ENCODE measurements at regions of chr14 and their contacts with region 1.

Region 1: GRCh38 chr14:96100161-96101029 is 61.2 kb downstream of the C14orf132 start:
- DNase-seq: peak; percentile 78
- ATAC-seq: peak; percentile 70
- H3K4me3 ChIP-seq: no peak overlapping the region
- H3K27ac ChIP-seq: no peak overlapping the region
- H3K4me1 ChIP-seq: peaks cover 8% of the 10 kb centered on the region
- H3K27me3 ChIP-seq: no peaks in the 10 kb centered on the region
- CTCF ChIP-seq: peak; percentile 93

Region 2: DNA sequence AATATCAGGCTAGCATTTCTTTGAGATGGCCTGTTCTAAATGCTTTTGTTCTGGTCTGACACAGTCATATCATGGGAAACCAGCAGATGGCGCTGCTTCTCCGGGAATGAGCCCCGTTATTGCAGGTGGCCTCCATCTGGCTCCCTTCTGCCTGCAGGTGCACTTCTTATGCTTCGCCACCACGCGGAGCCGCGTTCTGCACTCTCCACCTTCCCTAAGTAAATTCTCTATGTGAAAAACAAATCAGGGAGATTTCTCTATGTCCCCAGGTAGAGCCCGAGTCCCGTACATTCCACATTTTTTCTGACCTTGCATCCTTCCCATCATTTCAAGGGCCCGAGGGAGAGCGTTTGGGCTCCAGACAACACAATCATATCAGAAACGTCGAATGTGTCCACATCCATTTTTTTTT is 539.4 kb before region 1 on chr14:
- CTCF ChIA-PET with region 1: no interaction called
- POLR2A ChIA-PET with region 1: no interaction called
- intact Hi-C with region 1: loop called (anchors 10 kb)
- DNase-seq: peak; percentile 90
- ATAC-seq: peak; percentile 96
- H3K4me3 ChIP-seq: no peak overlapping the region
- H3K27ac ChIP-seq: no peak overlapping the region
- H3K4me1 ChIP-seq: no peaks in the 10 kb centered on the region
- H3K27me3 ChIP-seq: no peaks in the 10 kb centered on the region
- CTCF ChIP-seq: peak; percentile 97

Region 3: GRCh38 chr14:95993768-95994592 is 106.4 kb before region 1 on chr14:
- CTCF ChIA-PET with region 1: no interaction called
- POLR2A ChIA-PET with region 1: no interaction called
- intact Hi-C with region 1: loop called (anchors 10 kb)
- DNase-seq: peak; percentile 49
- ATAC-seq: no peak
- H3K4me3 ChIP-seq: no peak overlapping the region
- H3K27ac ChIP-seq: no peak overlapping the region
- H3K4me1 ChIP-seq: no peaks in the 10 kb centered on the region
- H3K27me3 ChIP-seq: no peaks in the 10 kb centered on the region
- CTCF ChIP-seq: peak; percentile 80

Region 4: GRCh38 chr14:96056509-96057422 is 43.6 kb before region 1 on chr14:
- CTCF ChIA-PET with region 1: no interaction called
- POLR2A ChIA-PET with region 1: no interaction called
- intact Hi-C with region 1: loop called (anchors 2 kb)
- DNase-seq: peak; percentile 55
- ATAC-seq: no peak
- H3K4me3 ChIP-seq: no peak overlapping the region
- H3K27ac ChIP-seq: no peak overlapping the region
- H3K4me1 ChIP-seq: no peaks in the 10 kb centered on the region
- H3K27me3 ChIP-seq: peaks cover 22% of the 10 kb centered on the region
- CTCF ChIP-seq: peak; percentile 60

Region 5: GRCh38 chr14:96275177-96276112 is 175.1 kb after region 1 on chr14:
- CTCF ChIA-PET with region 1: interaction called, 4 read pairs
- POLR2A ChIA-PET with region 1: no interaction called
- intact Hi-C with region 1: loop called (anchors 1 kb)
- DNase-seq: peak; percentile 60
- ATAC-seq: peak; percentile 74
- H3K4me3 ChIP-seq: no peak overlapping the region
- H3K27ac ChIP-seq: no peak overlapping the region
- H3K4me1 ChIP-seq: no peaks in the 10 kb centered on the region
- H3K27me3 ChIP-seq: no peaks in the 10 kb centered on the region
- CTCF ChIP-seq: peak; percentile 93

Region 6: GRCh38 chr14:96357216-96357615 is 256.8 kb after region 1 on chr14:
- CTCF ChIA-PET with region 1: no interaction called
- POLR2A ChIA-PET with region 1: no interaction called
- intact Hi-C with region 1: no loop called
- DNase-seq: no peak
- ATAC-seq: no peak
- H3K4me3 ChIP-seq: no peak overlapping the region
- H3K27ac ChIP-seq: no peak overlapping the region
- H3K4me1 ChIP-seq: peaks cover 12% of the 10 kb centered on the region
- H3K27me3 ChIP-seq: no peaks in the 10 kb centered on the region
- CTCF ChIP-seq: no peak

Region 7: GRCh38 chr14:96424109-96424989 is 324.0 kb after region 1 on chr14:
- CTCF ChIA-PET with region 1: no interaction called
- POLR2A ChIA-PET with region 1: no interaction called
- intact Hi-C with region 1: loop called (anchors 2 kb)
- DNase-seq: peak; percentile 89
- ATAC-seq: peak; percentile 92
- H3K4me3 ChIP-seq: peak overlapping the region; percentile 71
- H3K27ac ChIP-seq: no peak overlapping the region
- H3K4me1 ChIP-seq: no peaks in the 10 kb centered on the region
- H3K27me3 ChIP-seq: no peaks in the 10 kb centered on the region; the same call in 1 of the 2 replicates
- CTCF ChIP-seq: peak; percentile 92

Measured in PC-3 (cell line).